Naive thymus-derived CD4-positive, alpha-beta T cell (primary cell): ENCODE measurements at regions of chr15 and their contacts with region 1.

Region 1: DNA sequence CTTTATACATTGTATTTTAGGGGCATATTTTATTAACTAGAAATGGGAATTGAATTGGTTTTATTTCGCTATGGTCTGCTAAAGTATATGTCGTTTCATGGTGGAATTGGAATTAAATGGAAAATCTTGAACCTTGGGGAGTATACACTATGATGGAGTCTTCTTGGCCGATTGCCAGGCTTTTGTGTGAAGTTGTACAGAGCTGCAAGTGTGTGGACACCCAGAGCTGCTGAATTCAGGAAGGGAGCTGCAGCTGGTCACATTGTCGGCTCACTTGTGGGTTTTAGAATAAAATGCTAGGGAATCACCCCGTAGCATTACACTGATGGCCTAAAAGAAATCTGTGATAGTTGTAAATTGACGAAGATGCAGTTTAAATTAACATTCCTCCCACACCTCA is 35.1 kb downstream of the USP3 start:
- DNase-seq: no peak
- ATAC-seq: no peak
- H3K4me3 ChIP-seq: no peak overlapping the region
- H3K4me3 Mint-ChIP-seq: no peak overlapping the region
- H3K27ac ChIP-seq: no peak overlapping the region
- H3K27ac Mint-ChIP-seq: peak overlapping the region in 4 of 9 donors; percentile 5 to 69 (median 13)
- H3K4me1 ChIP-seq: peaks cover 5 to 7% of the 10 kb centered on the region in 2 donors
- H3K4me1 Mint-ChIP-seq: peaks cover 30 to 80% (median 73%) of the 10 kb centered on the region in 7 donors
- H3K27me3 ChIP-seq: no peaks in the 10 kb centered on the region
- H3K27me3 Mint-ChIP-seq: no peaks in the 10 kb centered on the region

Region 2: GRCh38 chr15:63466378-63467192 is 72.9 kb before region 1 on chr15:
- CTCF ChIA-PET with region 1: interaction called, 7 read pairs
- POLR2A ChIA-PET with region 1: no interaction called
- intact Hi-C with region 1: loop called in 1 of 2 experiments (anchors 2 kb)
- DNase-seq: peak in 8 of 9 donors; percentile 46 to 80 (median 74)
- ATAC-seq: peak; percentile 95
- H3K4me3 ChIP-seq: no peak overlapping the region
- H3K4me3 Mint-ChIP-seq: peak overlapping the region in 2 of 10 donors; percentile 5 to 6
- H3K27ac ChIP-seq: no peak overlapping the region
- H3K27ac Mint-ChIP-seq: peak overlapping the region; percentile 37 to 96 (median 82)
- H3K4me1 ChIP-seq: peaks cover 0 to 4% of the 10 kb centered on the region in 2 donors
- H3K4me1 Mint-ChIP-seq: peaks cover 12 to 43% (median 33%) of the 10 kb centered on the region in 7 donors
- H3K27me3 ChIP-seq: no peaks in the 10 kb centered on the region
- H3K27me3 Mint-ChIP-seq: peaks cover 0 to 18% (median 0%) of the 10 kb centered on the region in 5 donors